ENCODE measurements at regions of chr3 and their contacts with region 1.

Region 1: GRCh38 chr3:152444029-152444641 is 175.4 kb downstream of the MBNL1 start:
- DNase-seq: no peak
- H3K4me3 ChIP-seq: no peak overlapping the region
- H3K27ac ChIP-seq: no peak overlapping the region
- H3K4me1 ChIP-seq: peaks cover 5% of the 10 kb centered on the region
- H3K27me3 ChIP-seq: no peaks in the 10 kb centered on the region
- CTCF ChIP-seq: peak; percentile 47 to 64 (median 61)
- POLR2A ChIP-seq: no peak

Region 2: GRCh38 chr3:152268555-152269425 is 175.3 kb before region 1 on chr3 and contains the start of gene MBNL1:
- intact Hi-C with region 1: loop called (anchors 10 kb)
- DNase-seq: peak; percentile 90
- H3K4me3 ChIP-seq: peak within 1 kb of the TSS; percentile 74 to 88
- H3K27ac ChIP-seq: peak within 1 kb of the TSS; percentile 97 to 99
- H3K4me1 ChIP-seq: peaks cover 31% of the 10 kb centered on the region
- H3K27me3 ChIP-seq: no peaks in the 10 kb centered on the region
- CTCF ChIP-seq: no peak
- POLR2A ChIP-seq: no peak
- total RNA-seq, gene MBNL1: 145 to 167 TPM